Right ventricle myocardium inferior (tissue), 1 donor: ENCODE measurements at regions of chr13 and their contacts with region 1.

Region 1: DNA sequence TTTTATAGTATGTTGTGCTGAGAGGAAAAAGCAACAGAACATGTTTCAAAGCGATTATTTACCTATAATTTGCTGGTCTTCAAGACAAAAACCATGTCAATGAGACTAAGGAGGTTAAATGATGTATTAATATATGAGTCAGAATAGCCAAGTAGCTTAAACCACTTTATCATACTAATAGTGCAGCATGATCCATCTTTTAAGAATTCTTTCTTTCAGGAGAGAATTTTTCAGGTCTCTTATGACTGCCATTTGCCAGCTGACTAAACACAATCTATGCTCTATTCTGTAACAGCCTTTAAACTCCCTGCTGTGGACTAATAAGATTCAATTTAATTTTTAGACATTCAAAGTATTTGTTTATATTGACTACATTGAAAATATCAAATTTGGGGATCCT is 93.7 kb downstream of the TRPC4 start:
- DNase-seq: no peak
- ATAC-seq: no peak

Region 2: DNA sequence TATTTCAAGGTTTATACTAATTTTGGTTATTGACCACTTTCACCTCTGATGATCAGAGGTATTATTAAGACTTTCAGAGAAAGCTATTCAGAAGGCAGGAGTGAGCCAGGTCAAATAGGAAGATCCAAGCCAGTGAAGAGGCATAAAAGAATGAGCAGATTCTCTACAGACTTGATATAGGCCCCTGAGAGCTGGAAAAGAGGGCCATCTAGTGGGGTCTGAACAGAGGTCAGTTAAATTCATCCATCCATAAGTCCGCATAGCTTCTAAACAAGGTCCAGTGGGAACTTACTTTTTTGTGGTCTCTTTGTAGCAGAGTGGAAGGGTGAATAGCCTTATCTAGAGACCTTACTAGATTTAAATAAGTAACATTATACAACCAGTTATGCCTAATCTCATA is 447.2 kb after region 1 on chr13:
- intact Hi-C with region 1: loop called (anchors 10 kb)
- DNase-seq: no peak
- ATAC-seq: peak; percentile 23